AG04450 (cell line): ENCODE measurements at regions of chr5 and their contacts with region 1.

Region 1: DNA sequence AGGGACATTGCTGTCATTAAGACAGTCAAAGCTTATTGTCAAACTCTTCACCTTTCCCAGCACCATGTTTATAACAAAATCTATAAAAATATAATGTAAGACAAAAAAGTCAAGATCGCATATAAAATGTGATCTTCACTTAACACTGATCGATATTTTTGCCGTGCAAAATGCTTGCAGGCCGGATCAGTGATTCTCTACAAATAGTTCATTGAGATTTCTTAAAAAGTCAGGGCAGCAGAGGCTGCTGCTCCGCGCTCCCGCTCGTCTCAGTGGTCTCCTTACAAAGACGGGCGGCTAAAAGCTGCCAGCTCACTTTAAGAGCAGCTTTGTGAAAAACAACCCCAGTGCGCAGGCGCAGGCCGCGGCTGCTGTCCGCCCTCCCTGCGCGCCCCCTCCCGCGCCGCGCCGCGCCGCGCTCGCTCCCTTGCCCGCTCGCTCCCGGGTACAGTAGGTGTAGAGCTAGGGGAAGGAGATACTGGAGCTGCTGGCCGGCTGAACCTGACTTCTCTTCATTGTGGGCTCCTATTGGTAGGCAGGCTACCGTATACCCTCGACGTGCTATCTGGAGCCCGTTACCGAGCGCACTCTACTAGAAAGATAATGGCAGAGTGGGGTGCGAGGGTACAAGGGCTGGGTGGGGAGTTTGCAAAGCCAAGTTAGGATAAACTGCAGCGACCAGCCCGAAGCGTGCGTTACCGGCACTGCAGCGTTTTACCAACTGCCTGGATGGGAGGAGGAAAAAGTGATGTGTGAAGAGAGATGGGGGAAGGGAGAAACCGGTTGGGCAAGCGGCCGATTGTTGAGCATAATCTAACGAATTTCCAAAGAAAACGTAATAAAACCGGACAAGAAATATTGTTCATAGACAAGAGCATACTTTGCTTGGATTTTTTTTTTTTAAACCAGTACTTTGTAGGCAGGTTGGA is at the start of gene ARRDC3:
- DNase-seq: peak; percentile 91
- H3K4me3 ChIP-seq: peak within 1 kb of the TSS; percentile 86
- H3K27ac ChIP-seq: peak within 1 kb of the TSS; percentile 82
- H3K27me3 ChIP-seq: no peaks in the 10 kb centered on the region
- CTCF ChIP-seq: no peak
- polyA plus RNA-seq, gene ARRDC3: 26.7 and 38.3 TPM in 2 replicates

Region 2: GRCh38 chr5:90940227-90940995 is 442.9 kb before region 1 on chr5:
- CTCF ChIA-PET with region 1: interaction called, 12 read pairs
- POLR2A ChIA-PET with region 1: no interaction called
- DNase-seq: no peak
- H3K4me3 ChIP-seq: no peak overlapping the region
- H3K27ac ChIP-seq: no peak overlapping the region
- H3K27me3 ChIP-seq: no peaks in the 10 kb centered on the region
- CTCF ChIP-seq: no peak

Region 3: GRCh38 chr5:91101600-91102379 is 281.5 kb before region 1 on chr5:
- CTCF ChIA-PET with region 1: interaction called, 100 read pairs
- POLR2A ChIA-PET with region 1: no interaction called
- DNase-seq: peak; percentile 73
- H3K4me3 ChIP-seq: no peak overlapping the region
- H3K27ac ChIP-seq: no peak overlapping the region
- H3K27me3 ChIP-seq: no peaks in the 10 kb centered on the region
- CTCF ChIP-seq: peak; percentile 83

Region 4: GRCh38 chr5:91126448-91126847 is 256.8 kb before region 1 on chr5:
- CTCF ChIA-PET with region 1: interaction called, 12 read pairs
- POLR2A ChIA-PET with region 1: interaction called, 7 read pairs
- DNase-seq: peak; percentile 74
- H3K4me3 ChIP-seq: no peak overlapping the region
- H3K27ac ChIP-seq: peak overlapping the region; percentile 41
- H3K27me3 ChIP-seq: no peaks in the 10 kb centered on the region
- CTCF ChIP-seq: no peak

Region 5: DNA sequence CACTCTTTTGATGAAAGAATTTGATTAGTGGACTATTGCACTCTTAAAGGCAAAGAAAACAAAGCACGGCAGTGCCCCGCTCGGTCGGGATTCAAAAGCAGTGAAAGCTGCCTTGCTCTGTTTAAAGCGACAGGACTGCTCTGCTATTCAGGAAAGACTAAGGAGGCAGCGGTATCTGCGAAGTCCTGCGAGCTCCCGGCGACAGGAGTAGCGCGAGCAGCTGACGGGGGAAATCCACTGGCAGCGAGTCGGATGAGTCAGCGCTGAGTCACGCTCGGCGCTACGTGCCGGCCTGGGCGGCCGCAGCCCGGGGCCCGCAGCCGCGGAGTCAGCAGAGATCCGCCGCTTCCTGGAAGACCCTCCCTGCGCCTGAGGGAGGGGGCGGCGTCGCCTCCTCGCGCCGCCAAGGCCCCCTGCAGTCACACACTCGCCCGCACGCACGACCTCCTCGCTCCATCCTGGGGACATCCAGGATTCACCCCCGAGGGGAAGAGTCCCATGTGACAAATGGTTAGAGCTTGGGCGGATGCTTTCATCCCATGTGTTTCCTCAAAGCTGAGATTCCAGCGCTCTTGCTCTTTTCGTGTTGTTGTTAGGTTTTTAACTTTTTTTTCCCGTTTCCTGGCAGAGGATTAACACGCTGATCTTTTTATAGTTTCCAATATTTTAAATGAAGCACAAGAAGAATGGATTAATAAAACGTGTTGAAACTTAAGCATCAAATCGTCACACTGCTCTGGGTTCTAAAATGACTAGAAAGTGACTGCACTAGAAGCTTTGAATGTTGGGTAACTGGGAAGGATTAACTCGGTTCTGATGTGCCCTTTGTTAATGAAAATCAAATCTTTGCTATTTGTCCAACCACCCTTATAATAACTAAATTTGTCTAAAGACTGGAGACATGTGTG is 102.7 kb before region 1 on chr5:
- CTCF ChIA-PET with region 1: interaction called, 10 read pairs
- POLR2A ChIA-PET with region 1: interaction called, 21 read pairs
- DNase-seq: peak; percentile 91
- H3K4me3 ChIP-seq: peak overlapping the region; percentile 62
- H3K27ac ChIP-seq: peak overlapping the region; percentile 94
- H3K27me3 ChIP-seq: no peaks in the 10 kb centered on the region
- CTCF ChIP-seq: no peak

Region 6: DNA sequence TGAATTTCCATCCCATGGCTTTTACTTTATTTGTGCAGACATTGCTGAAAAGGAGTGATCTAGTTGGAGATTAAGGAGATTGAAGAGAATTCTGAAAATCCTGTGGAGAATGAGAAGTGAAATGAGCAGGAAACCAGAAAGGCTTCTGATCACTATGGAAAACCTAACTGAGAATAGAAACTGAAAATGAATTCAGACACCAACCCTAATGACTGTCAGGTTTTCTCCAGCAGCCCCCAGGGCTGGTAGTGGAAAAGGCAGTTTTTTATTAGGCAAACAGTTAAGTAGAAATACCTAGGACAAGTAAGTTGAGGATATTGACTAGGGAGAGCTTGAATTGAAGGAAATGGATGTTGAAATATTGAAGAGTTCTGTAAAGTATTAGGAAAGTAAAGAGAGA is 14.5 kb after region 1 on chr5:
- CTCF ChIA-PET with region 1: interaction called, 47 read pairs
- POLR2A ChIA-PET with region 1: no interaction called
- DNase-seq: no peak
- H3K4me3 ChIP-seq: no peak overlapping the region
- H3K27ac ChIP-seq: no peak overlapping the region
- H3K27me3 ChIP-seq: no peaks in the 10 kb centered on the region
- CTCF ChIP-seq: no peak

Region 7: DNA sequence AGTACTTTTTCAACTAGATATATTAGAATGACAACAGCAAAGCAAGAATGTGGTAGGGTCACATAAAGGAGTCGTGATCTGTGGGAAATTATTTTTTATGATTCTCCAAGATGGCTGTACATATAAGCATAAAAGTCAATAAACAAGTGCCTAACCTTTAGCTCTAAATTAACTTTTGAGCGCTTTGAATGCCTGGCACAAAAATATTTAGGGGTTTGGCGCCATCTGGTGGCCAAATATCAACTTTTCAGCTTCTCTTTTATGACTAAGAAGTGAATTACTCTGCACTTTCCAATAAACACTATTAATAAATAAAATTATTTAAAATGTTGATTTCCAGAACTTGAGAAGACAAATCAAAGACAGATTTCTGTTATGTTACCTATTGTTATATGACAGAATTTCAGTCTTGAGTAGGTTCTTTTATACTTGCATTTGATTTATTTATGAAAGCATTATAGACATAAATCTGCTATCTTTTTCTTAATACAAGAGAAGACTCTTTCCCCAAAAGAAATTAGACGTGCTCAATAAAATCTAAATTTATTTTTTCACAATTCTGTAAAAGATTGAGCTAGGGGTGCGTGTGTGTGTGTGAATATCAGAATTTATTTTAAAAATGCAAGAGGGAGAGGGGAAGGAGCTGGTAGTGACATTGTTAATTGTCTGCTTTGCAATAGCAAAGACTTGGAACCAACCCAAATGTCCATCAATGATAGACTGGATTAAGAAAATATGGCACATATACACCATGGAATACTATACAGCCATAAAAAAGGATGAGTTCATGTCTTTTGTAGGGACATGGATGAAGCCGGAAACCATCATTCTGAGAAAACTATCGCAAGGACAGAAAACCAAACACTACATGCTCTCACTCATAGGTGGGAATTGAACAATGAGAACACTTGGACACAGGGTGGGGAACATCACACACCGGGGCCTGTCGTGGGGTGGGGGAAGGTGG is 36.6 kb after region 1 on chr5:
- CTCF ChIA-PET with region 1: interaction called, 146 read pairs
- POLR2A ChIA-PET with region 1: interaction called, 5 read pairs
- DNase-seq: peak; percentile 26
- H3K4me3 ChIP-seq: no peak overlapping the region
- H3K27ac ChIP-seq: no peak overlapping the region
- H3K27me3 ChIP-seq: no peaks in the 10 kb centered on the region
- CTCF ChIP-seq: peak; percentile 66